Endothelial cell of umbilical vein (primary cell): ENCODE measurements at regions of chr3 and their contacts with region 1.

Region 1: DNA sequence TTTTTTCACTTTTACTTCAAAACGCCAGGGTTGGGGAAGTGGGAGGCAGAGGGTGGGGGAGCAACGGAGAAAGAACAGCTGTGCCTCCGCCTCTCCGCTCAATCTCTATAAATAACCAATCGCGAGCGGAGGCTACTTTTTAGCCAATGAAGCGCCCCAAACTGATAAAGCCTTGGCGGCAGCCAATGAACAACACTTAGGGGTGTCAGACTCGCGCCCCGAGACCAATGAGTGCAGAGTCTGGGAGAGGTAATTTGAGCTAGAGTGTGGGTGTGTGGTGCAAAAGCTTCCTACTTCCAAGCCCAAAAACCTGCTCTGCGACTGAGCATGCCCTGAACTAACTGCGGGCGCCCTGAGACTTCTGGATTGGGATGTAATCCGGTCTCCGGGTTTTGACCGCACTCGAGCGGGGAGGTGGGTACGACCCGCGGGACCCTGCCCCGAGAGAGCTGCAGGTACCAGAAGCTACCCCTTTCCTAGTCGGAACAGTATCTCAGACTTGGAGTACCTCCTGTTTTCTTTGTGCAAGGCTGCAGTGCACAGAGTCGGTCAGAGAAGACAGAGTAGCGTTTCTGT is 800 bp upstream of the RAP2B start:
- DNase-seq: peak; percentile 99
- H3K4me3 ChIP-seq: peak overlapping the region; percentile 88 to 100 (median 94)
- H3K27ac ChIP-seq: peak overlapping the region; percentile 84
- H3K4me1 ChIP-seq: peaks cover 18% of the 10 kb centered on the region
- H3K27me3 ChIP-seq: no peaks in the 10 kb centered on the region
- CTCF ChIP-seq: no peak
- POLR2A ChIP-seq: no peak

Region 2: DNA sequence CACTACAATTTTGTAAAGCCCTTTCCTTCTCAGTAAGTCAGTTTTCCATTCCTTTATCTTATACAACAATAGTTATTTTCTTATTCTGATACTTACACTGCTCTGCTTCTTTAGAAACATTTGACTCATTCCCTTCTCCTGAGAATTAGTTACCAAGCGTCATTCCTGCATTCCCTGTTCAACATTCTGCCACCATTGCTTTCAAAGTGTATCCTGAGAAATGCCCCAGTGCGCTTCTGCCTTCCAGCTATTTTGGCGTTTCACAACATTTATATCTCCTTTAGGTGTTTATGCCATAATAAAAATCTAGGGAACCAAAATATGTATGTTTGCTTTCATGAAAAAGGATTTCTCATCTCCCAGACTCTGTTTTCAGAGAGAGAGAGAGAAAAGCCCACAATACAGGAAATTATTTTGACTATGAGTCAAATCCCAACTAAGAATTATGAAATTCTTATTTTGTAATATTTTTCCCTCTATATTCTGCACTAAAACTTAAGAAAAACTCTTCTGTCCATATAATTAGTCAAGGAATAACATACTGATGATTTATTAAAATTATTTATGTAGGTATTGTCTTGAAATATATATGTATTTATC is 117.4 kb before region 1 on chr3:
- CTCF ChIA-PET with region 1: interaction called, 203 read pairs
- POLR2A ChIA-PET with region 1: interaction called, 15 read pairs
- dilution Hi-C with region 1: no loop called
- intact Hi-C with region 1: loop called (anchors 1 kb)
- DNase-seq: peak; percentile 43
- H3K4me3 ChIP-seq: peak overlapping the region in 2 of 3 experiments; percentile 4 to 11
- H3K27ac ChIP-seq: peak overlapping the region; percentile 68
- H3K4me1 ChIP-seq: peaks cover 12% of the 10 kb centered on the region
- H3K27me3 ChIP-seq: no peaks in the 10 kb centered on the region
- CTCF ChIP-seq: no peak
- POLR2A ChIP-seq: no peak

Region 3: GRCh38 chr3:153070511-153070868 is 90.7 kb before region 1 on chr3:
- CTCF ChIA-PET with region 1: no interaction called
- POLR2A ChIA-PET with region 1: no interaction called
- dilution Hi-C with region 1: no loop called
- intact Hi-C with region 1: no loop called
- DNase-seq: no peak
- H3K4me3 ChIP-seq: no peak overlapping the region
- H3K27ac ChIP-seq: no peak overlapping the region
- H3K4me1 ChIP-seq: no peaks in the 10 kb centered on the region
- H3K27me3 ChIP-seq: no peaks in the 10 kb centered on the region
- CTCF ChIP-seq: no peak
- POLR2A ChIP-seq: no peak

Region 4: DNA sequence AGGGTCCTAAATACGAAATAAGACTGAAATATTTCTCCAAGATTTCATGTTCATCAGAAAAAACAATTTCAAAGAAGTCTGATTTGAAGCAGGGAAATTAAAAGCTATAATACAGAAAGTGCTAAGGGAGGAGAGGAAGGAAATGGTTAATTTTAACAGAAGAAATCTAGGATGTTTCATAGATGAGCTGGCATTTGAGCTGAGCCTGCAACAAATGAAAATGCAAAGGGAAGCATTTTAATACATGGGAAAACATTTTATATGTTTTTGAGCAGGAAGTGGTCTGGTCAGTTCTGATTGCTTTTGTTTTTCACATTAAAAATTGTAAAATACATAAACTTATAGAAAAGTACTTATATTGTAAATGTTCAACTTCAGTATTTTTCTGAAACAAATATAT is 16.4 kb before region 1 on chr3:
- CTCF ChIA-PET with region 1: interaction called, 17 read pairs
- POLR2A ChIA-PET with region 1: interaction called, 9 read pairs
- dilution Hi-C with region 1: no loop called
- intact Hi-C with region 1: loop called (anchors 1 kb)
- DNase-seq: peak; percentile 64
- H3K4me3 ChIP-seq: peak overlapping the region in 1 of 3 experiments; percentile 28
- H3K27ac ChIP-seq: peak overlapping the region; percentile 45
- H3K4me1 ChIP-seq: peaks cover 34% of the 10 kb centered on the region
- H3K27me3 ChIP-seq: no peaks in the 10 kb centered on the region
- CTCF ChIP-seq: no peak
- POLR2A ChIP-seq: no peak

Region 5: DNA sequence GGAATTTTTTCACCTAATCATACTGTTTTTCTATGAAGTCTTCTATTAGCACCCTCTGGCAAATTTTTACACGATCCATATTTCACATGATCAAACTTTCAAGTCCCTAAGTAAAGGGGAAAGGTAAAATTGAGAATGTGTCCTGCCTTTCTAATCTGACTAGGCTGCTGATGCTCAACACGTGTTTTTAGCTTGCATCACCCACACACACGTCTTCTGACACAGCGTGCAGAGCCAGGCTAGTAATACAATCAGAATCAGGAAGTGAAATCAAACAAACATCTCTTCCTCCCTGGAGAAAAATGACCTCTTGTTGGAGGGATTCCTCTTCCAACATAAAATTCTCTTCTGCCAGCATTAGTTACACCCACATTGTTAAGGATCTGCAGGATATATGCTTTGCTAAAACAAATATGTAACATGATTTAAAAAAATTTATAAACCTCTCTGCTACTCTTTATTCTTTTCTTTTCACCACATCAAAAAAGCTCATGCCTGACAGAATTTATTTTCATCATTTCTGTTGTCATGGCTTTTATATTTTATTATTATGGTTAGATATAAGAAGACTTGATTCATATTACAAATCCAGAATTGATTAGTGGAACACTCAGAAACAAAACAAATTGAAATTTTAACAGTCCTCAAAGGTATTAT is 123.2 kb after region 1 on chr3:
- CTCF ChIA-PET with region 1: interaction called, 79 read pairs
- POLR2A ChIA-PET with region 1: no interaction called
- dilution Hi-C with region 1: no loop called
- intact Hi-C with region 1: loop called (anchors 2 kb)
- DNase-seq: peak; percentile 73
- H3K4me3 ChIP-seq: no peak overlapping the region
- H3K27ac ChIP-seq: peak overlapping the region; percentile 35
- H3K4me1 ChIP-seq: peaks cover 15% of the 10 kb centered on the region
- H3K27me3 ChIP-seq: no peaks in the 10 kb centered on the region
- CTCF ChIP-seq: no peak
- POLR2A ChIP-seq: no peak

Region 6: DNA sequence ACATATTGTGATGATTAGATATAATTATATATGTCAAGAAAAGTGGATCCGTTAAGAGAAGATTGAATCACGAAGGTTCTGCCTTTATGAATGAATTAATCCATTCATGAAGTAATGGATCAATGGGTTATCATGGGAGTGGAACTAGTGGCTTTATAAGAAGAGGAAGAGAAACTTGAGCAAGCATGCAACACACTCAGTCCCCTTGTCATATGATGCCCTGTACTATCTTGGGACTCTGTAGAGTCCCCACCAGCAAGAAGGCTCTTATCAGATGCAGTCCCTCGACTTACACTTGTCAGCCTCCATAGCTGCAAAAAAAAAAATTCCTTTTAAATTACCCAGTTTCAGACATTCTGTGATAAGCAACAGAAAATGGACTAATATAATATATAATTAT is 302.7 kb after region 1 on chr3:
- CTCF ChIA-PET with region 1: no interaction called
- POLR2A ChIA-PET with region 1: no interaction called
- dilution Hi-C with region 1: no loop called
- intact Hi-C with region 1: no loop called
- DNase-seq: no peak
- H3K4me3 ChIP-seq: no peak overlapping the region
- H3K27ac ChIP-seq: no peak overlapping the region
- H3K4me1 ChIP-seq: no peaks in the 10 kb centered on the region
- H3K27me3 ChIP-seq: no peaks in the 10 kb centered on the region
- CTCF ChIP-seq: no peak
- POLR2A ChIP-seq: no peak

Region 7: DNA sequence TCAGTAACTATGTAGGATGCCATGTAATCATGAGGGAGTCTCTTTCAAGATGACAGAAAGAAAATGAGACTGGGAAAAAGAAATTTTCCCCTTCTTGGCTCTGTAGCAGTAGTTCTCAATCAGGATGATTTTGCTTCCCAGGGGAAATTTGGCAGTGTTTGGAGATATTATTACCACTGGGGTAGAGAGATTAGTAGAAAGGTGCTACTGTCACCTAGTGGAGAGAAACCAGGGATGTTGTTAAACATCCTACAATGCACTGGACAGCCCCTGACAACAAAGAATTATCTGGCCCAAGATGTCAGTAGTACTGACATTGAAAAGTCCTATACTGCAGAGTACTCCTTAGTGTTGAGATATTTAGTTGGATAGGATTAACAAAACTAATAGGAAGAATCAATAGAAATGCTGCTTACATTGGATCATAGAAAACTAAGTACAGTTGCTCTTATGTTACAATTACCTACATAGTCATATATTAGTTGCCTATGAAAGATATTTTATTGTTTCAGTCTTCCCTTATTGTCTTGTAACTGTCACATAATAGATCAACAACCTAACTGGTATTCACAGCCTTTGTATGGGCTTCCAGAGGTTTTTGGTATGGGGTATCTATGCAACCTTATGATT is 434.1 kb after region 1 on chr3:
- CTCF ChIA-PET with region 1: interaction called, 6 read pairs
- POLR2A ChIA-PET with region 1: no interaction called
- dilution Hi-C with region 1: no loop called
- intact Hi-C with region 1: loop called (anchors 1 kb)
- DNase-seq: peak; percentile 66
- H3K4me3 ChIP-seq: no peak overlapping the region
- H3K27ac ChIP-seq: no peak overlapping the region
- H3K4me1 ChIP-seq: peaks cover 15% of the 10 kb centered on the region
- H3K27me3 ChIP-seq: no peaks in the 10 kb centered on the region
- CTCF ChIP-seq: peak; percentile 35 to 62
- POLR2A ChIP-seq: no peak

Region 8: GRCh38 chr3:153829606-153830170 is 668.5 kb after region 1 on chr3:
- CTCF ChIA-PET with region 1: no interaction called
- POLR2A ChIA-PET with region 1: no interaction called
- dilution Hi-C with region 1: no loop called
- intact Hi-C with region 1: loop called (anchors 1 kb)
- DNase-seq: peak; percentile 88
- H3K4me3 ChIP-seq: peak overlapping the region in 1 of 3 experiments; percentile 16
- H3K27ac ChIP-seq: peak overlapping the region; percentile 93
- H3K4me1 ChIP-seq: peaks cover 20% of the 10 kb centered on the region
- H3K27me3 ChIP-seq: no peaks in the 10 kb centered on the region
- CTCF ChIP-seq: no peak
- POLR2A ChIP-seq: peak; percentile 36

Region 9: GRCh38 chr3:153970741-153971347 is 809.6 kb after region 1 on chr3:
- CTCF ChIA-PET with region 1: interaction called, 9 read pairs
- POLR2A ChIA-PET with region 1: no interaction called
- dilution Hi-C with region 1: no loop called
- intact Hi-C with region 1: loop called (anchors 1 kb)
- DNase-seq: peak; percentile 64
- H3K4me3 ChIP-seq: no peak overlapping the region
- H3K27ac ChIP-seq: no peak overlapping the region
- H3K4me1 ChIP-seq: no peaks in the 10 kb centered on the region
- H3K27me3 ChIP-seq: no peaks in the 10 kb centered on the region
- CTCF ChIP-seq: peak; percentile 23 to 33
- POLR2A ChIP-seq: no peak